ENCODE measurements at regions of chr15 and their contacts with region 1.

Region 1: GRCh38 chr15:57118013-57118799 is 199.8 kb downstream of the TCF12 start:
- DNase-seq: no peak
- ATAC-seq: peak; percentile 75
- H3K4me3 ChIP-seq: peak overlapping the region; percentile 37; the same call in 1 of the 2 replicates
- H3K27ac ChIP-seq: peak overlapping the region; percentile 79
- H3K4me1 ChIP-seq: peaks cover 19% of the 10 kb centered on the region
- H3K27me3 ChIP-seq: no peaks in the 10 kb centered on the region
- CTCF ChIP-seq: no peak
- EP300 ChIP-seq: no peak
- POLR2A ChIP-seq: no peak
- RAD21 ChIP-seq: no peak

Region 2: GRCh38 chr15:56929399-56929798 is 188.8 kb before region 1 on chr15:
- CTCF ChIA-PET with region 1: no interaction called
- POLR2A ChIA-PET with region 1: no interaction called
- RAD21 ChIA-PET with region 1: no interaction called
- SMC1A ChIA-PET with region 1: no interaction called
- in situ Hi-C with region 1: no loop called
- intact Hi-C with region 1: no loop called
- DNase-seq: no peak
- ATAC-seq: peak; percentile 27; the same call in 1 of the 3 replicates
- H3K4me3 ChIP-seq: no peak overlapping the region
- H3K27ac ChIP-seq: no peak overlapping the region
- H3K4me1 ChIP-seq: peaks cover 10% of the 10 kb centered on the region; the same call in 1 of the 2 replicates
- H3K27me3 ChIP-seq: no peaks in the 10 kb centered on the region
- CTCF ChIP-seq: no peak
- EP300 ChIP-seq: no peak
- POLR2A ChIP-seq: no peak
- RAD21 ChIP-seq: no peak

Region 3: DNA sequence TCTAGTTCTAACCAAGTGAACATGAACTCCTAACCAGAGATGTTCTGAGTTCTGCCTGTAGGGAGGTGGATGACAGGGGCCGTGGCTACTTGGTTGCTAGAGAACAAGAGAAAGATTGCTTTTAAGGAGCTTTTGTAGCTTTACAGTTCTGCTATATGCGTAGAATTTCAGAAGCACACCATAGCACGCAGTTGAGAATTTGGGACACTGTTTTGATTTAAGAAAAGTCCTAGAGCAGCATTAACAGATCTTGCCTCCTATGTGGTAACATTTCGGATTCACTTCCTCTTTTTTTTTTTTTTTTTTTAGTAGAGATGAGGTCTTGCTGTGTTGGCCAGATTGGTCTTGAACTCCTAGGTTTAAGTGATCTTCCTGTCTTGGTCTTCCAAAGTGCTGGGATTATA is 18.1 kb before region 1 on chr15:
- CTCF ChIA-PET with region 1: interaction called, 5 read pairs
- POLR2A ChIA-PET with region 1: interaction called, 4 read pairs
- RAD21 ChIA-PET with region 1: interaction called, 6 read pairs
- SMC1A ChIA-PET with region 1: interaction called, 43 read pairs
- in situ Hi-C with region 1: no loop called
- intact Hi-C with region 1: no loop called
- DNase-seq: no peak
- ATAC-seq: peak; percentile 72
- H3K4me3 ChIP-seq: no peak overlapping the region
- H3K27ac ChIP-seq: peak overlapping the region; percentile 55
- H3K4me1 ChIP-seq: peaks cover 19% of the 10 kb centered on the region
- H3K27me3 ChIP-seq: no peaks in the 10 kb centered on the region
- CTCF ChIP-seq: no peak
- EP300 ChIP-seq: no peak
- POLR2A ChIP-seq: no peak
- RAD21 ChIP-seq: no peak

Region 4: DNA sequence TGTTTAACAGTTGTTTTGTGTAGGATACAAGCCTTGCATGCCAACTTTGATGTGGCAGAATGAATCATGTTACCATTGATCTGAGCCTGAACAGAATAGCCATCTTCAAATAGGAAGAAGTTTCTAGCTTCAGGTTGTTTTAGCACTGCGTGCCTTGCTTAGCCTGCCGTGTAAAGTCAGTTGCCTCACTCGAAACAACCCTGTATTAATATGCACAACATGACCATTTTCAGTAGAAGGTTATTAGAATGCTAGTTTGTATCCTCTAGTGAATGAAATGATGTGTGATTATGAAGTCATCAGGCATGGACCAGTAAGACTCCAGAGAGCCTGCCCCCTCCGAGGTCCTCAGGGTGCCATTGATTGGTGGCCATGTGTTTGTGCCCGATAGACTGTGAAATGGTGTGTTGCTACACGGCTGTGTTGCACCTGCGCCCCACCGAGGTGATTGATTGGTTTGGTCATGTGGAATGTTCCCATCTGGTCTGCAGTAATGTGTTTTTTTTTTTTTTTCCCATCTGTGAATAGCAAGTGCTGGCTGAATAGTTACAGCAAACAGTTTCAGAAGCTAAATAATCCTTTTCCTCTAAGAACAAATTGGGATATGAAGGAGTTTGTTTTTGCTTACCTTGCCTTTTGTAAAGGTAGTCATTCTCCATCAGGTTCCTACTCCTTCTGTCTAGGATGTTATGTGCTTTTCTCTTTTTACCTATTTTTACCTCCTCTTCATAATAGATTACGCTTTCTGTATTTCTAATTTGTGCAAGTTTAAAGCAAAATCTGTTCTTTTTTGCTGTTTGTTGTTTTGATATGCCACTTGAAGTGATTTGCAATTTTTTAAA is 15.1 kb after region 1 on chr15:
- CTCF ChIA-PET with region 1: interaction called, 12 read pairs
- POLR2A ChIA-PET with region 1: interaction called, 7 read pairs
- RAD21 ChIA-PET with region 1: interaction called, 8 read pairs
- SMC1A ChIA-PET with region 1: interaction called, 7 read pairs
- in situ Hi-C with region 1: no loop called
- intact Hi-C with region 1: no loop called
- DNase-seq: no peak
- ATAC-seq: peak; percentile 70
- H3K4me3 ChIP-seq: no peak overlapping the region
- H3K27ac ChIP-seq: no peak overlapping the region; the same call in 1 of the 2 replicates
- H3K4me1 ChIP-seq: peaks cover 15% of the 10 kb centered on the region
- H3K27me3 ChIP-seq: no peaks in the 10 kb centered on the region
- CTCF ChIP-seq: peak in 1 of 3 experiments; percentile 14; a peak in 1 of 6 replicates
- EP300 ChIP-seq: no peak
- POLR2A ChIP-seq: 0 out of 2 replicates have a peak, but pooled peaks have one; percentile 23
- RAD21 ChIP-seq: peak; percentile 48

Region 5: DNA sequence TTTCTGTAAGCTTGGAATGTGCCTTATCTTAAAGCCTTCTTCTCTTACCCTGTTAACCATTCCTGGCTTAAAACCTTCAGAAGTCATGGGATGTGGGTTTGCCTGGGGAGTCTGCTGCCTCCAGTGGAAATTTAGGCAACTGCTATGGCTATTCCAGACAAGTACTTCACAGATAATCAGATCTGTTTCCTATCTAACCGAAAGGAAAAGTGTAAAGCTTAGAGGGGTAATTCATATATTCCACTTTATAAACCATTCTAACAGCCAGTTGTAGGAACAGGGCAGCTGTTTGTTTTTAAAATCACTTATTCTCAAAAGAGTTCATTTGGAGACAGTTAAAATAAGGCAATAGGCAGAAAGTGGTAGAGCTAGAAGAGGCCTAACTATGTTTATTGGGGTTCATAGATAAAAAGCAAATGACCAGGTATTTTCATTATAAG is 20.2 kb after region 1 on chr15:
- CTCF ChIA-PET with region 1: interaction called, 12 read pairs
- POLR2A ChIA-PET with region 1: no interaction called
- RAD21 ChIA-PET with region 1: interaction called, 8 read pairs
- SMC1A ChIA-PET with region 1: interaction called, 5 read pairs
- in situ Hi-C with region 1: no loop called
- intact Hi-C with region 1: no loop called
- DNase-seq: no peak
- ATAC-seq: peak; percentile 79
- H3K4me3 ChIP-seq: no peak overlapping the region
- H3K27ac ChIP-seq: no peak overlapping the region
- H3K4me1 ChIP-seq: peaks cover under 1% of the 10 kb centered on the region
- H3K27me3 ChIP-seq: no peaks in the 10 kb centered on the region
- CTCF ChIP-seq: peak; percentile 51 to 69 (median 68)
- EP300 ChIP-seq: no peak
- POLR2A ChIP-seq: no peak
- RAD21 ChIP-seq: peak; percentile 61

Region 6: DNA sequence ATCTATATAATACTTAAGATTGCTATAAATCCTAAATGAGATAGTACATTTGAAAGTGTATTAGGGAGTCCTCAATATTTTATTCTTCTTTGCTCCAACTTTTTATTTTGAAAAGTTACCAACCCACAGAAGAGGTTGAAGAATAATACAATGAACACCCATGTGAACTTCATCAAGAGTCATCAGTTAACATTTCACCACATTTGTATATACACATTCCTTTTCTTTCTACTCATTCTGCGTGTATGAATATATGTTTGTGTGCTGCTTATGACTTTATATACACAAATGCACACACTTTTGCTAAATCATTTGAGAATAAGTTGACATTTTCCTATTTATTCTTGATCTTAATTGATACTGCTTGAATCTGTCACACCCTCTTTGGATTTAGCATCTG is 64.8 kb after region 1 on chr15:
- CTCF ChIA-PET with region 1: no interaction called
- POLR2A ChIA-PET with region 1: no interaction called
- RAD21 ChIA-PET with region 1: no interaction called
- SMC1A ChIA-PET with region 1: no interaction called
- in situ Hi-C with region 1: no loop called
- intact Hi-C with region 1: no loop called
- DNase-seq: no peak
- ATAC-seq: no peak
- H3K4me3 ChIP-seq: no peak overlapping the region
- H3K27ac ChIP-seq: no peak overlapping the region
- H3K4me1 ChIP-seq: no peaks in the 10 kb centered on the region
- H3K27me3 ChIP-seq: no peaks in the 10 kb centered on the region
- CTCF ChIP-seq: no peak
- EP300 ChIP-seq: no peak
- POLR2A ChIP-seq: no peak
- RAD21 ChIP-seq: no peak

Region 7: DNA sequence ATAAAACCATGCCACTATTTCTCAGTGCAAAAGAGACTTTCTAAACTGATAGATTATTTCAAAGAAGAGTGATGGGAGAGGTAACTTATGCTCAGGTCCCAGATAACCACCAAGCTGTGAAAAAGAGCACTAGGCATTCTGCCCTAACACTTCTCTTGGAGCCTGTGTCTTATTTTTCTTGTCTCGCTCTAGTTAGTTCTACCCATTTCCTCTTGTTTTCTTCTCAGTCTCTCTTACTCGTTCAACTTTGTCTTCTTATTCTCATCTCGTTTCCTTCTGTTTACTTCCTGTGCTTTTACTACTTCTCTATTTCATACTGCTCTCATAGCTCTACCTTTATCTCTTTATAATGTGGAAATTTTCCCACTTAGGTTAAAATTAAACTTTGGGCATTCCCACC is 166.3 kb after region 1 on chr15:
- CTCF ChIA-PET with region 1: no interaction called
- POLR2A ChIA-PET with region 1: no interaction called
- RAD21 ChIA-PET with region 1: no interaction called
- SMC1A ChIA-PET with region 1: no interaction called
- in situ Hi-C with region 1: no loop called
- intact Hi-C with region 1: no loop called
- DNase-seq: no peak
- ATAC-seq: peak; percentile 75
- H3K4me3 ChIP-seq: peak overlapping the region; percentile 24; the same call in 1 of the 2 replicates
- H3K27ac ChIP-seq: peak overlapping the region; percentile 54
- H3K4me1 ChIP-seq: peaks cover 56% of the 10 kb centered on the region
- H3K27me3 ChIP-seq: no peaks in the 10 kb centered on the region
- CTCF ChIP-seq: no peak
- EP300 ChIP-seq: no peak
- POLR2A ChIP-seq: no peak
- RAD21 ChIP-seq: no peak